T-cell (primary cell): ENCODE measurements at regions of chr4 and their contacts with region 1.

Region 1: DNA sequence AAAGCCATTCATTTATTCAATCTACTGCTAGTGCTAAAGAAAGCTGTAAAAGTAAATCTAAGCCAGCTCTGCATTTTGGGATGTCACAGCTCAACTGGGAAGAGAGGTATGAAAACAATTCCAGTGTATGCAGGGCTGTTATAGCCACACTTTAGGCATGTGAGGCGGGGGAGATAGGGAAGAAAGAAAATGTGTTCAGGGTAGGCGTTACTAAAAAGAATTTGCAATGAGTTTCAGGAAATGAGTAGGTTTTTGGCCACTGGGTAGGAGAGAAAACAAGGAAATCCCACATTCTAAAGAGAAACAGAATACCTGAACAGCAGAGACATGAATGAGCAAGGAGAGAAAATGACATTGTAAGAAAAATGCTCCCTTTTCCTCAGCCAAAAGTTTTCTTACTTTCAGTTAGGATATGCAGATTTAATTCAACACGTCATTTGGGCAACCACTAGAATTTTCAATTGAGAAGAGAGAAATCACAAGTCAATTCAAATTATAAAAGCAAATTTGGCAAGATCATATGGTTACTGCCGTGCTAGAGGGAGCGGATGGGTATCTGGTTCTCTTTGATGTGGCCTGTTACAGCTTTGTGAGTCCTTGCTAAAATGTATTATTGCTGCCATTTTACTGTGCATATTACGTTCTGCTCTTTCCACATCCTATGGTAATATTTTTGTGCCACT is 226.3 kb downstream of the KCNIP4 start:
- DNase-seq: no peak
- ATAC-seq: no peak
- H3K4me3 ChIP-seq: no peak overlapping the region
- H3K4me3 Mint-ChIP-seq: no peak overlapping the region
- H3K27ac ChIP-seq: no peak overlapping the region
- H3K27ac Mint-ChIP-seq: no peak overlapping the region
- H3K4me1 ChIP-seq: no peaks in the 10 kb centered on the region
- H3K4me1 Mint-ChIP-seq: no peaks in the 10 kb centered on the region
- H3K27me3 ChIP-seq: no peaks in the 10 kb centered on the region
- H3K27me3 Mint-ChIP-seq: no peaks in the 10 kb centered on the region

Region 2: GRCh38 chr4:21688596-21689265 is 33.6 kb before region 1 on chr4:
- CTCF ChIA-PET with region 1: no interaction called
- POLR2A ChIA-PET with region 1: no interaction called
- DNase-seq: no peak
- ATAC-seq: no peak
- H3K4me3 ChIP-seq: no peak overlapping the region
- H3K4me3 Mint-ChIP-seq: no peak overlapping the region
- H3K27ac ChIP-seq: no peak overlapping the region
- H3K27ac Mint-ChIP-seq: no peak overlapping the region
- H3K4me1 ChIP-seq: no peaks in the 10 kb centered on the region
- H3K4me1 Mint-ChIP-seq: no peaks in the 10 kb centered on the region
- H3K27me3 ChIP-seq: no peaks in the 10 kb centered on the region
- H3K27me3 Mint-ChIP-seq: no peaks in the 10 kb centered on the region

Region 3: DNA sequence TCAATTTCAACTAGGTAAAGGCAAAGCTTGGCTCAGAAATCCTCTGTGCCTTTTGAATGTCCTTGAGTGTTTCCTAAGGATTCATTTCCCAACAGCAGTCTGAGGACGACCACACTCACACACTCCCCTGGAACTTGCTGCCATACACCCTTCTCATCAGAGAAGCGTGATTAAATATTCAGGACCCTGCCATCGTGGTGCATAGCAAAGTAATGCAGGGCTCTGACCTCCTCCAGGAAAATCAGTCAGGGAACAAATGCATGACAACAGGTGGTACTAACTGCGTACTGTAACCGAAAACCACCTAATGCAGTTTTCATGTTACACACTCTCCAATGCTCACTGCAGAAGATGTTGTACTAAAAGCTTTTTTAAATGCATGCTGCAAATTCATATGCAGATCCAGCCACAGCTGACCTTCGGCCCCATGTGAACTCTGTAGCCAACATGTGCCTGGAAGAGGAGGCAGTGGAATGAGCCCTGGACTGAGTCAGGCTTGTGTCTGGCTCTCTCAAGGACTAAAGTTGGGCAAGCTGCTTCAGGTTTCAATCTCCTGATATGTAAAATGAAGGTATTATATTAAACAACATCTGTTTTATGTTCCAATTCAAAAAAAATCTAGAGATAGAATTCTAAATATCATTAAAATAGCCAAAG is 12.0 kb before region 1 on chr4:
- CTCF ChIA-PET with region 1: no interaction called
- POLR2A ChIA-PET with region 1: interaction called in 1 of 2 experiments, 15 read pairs
- DNase-seq: no peak
- ATAC-seq: no peak
- H3K4me3 ChIP-seq: no peak overlapping the region
- H3K4me3 Mint-ChIP-seq: no peak overlapping the region
- H3K27ac ChIP-seq: no peak overlapping the region
- H3K27ac Mint-ChIP-seq: no peak overlapping the region
- H3K4me1 ChIP-seq: no peaks in the 10 kb centered on the region
- H3K4me1 Mint-ChIP-seq: no peaks in the 10 kb centered on the region
- H3K27me3 ChIP-seq: no peaks in the 10 kb centered on the region
- H3K27me3 Mint-ChIP-seq: no peaks in the 10 kb centered on the region